ENCODE measurements at regions of chr16 and their contacts with region 1.

Region 1: GRCh38 chr16:88582912-88583575 is 12.8 kb downstream of the ZC3H18 start:
- DNase-seq: no peak
- ATAC-seq: no peak
- H3K4me3 Mint-ChIP-seq: no peak overlapping the region
- H3K27ac Mint-ChIP-seq: peak overlapping the region; percentile 45
- H3K4me1 Mint-ChIP-seq: peaks cover 46% of the 10 kb centered on the region
- H3K27me3 Mint-ChIP-seq: no peaks in the 10 kb centered on the region

Region 2: GRCh38 chr16:88569985-88570690 is 12.9 kb before region 1 on chr16 and contains the start of gene ZC3H18:
- CTCF ChIA-PET with region 1: interaction called, 10 read pairs
- DNase-seq: peak; percentile 97
- ATAC-seq: peak; percentile 91
- H3K4me3 Mint-ChIP-seq: peak within 1 kb of the TSS; percentile 87
- H3K27ac Mint-ChIP-seq: peak within 1 kb of the TSS; percentile 82
- H3K4me1 Mint-ChIP-seq: peaks cover 33% of the 10 kb centered on the region
- H3K27me3 Mint-ChIP-seq: no peaks in the 10 kb centered on the region
- total RNA-seq, gene ZC3H18: 88.1 to 93.9 TPM

Measured in activated CD8-positive, alpha-beta memory T cell treated with anti-CD3 and anti-CD28 coated beads, Interleukin-2, amount 10 ng/mL, durations not matched to agents 7 days and 5 days (primary cell).